Left colon (tissue), 2 donors: ENCODE measurements at regions of chr12 and their contacts with region 1.

Region 1: GRCh38 chr12:53344824-53345485 is 8.8 kb upstream of the SP7 start:
- DNase-seq: peak; percentile 71 to 80
- ATAC-seq: peak; percentile 92

Region 2: GRCh38 chr12:53151039-53151438 is 193.9 kb before region 1 on chr12:
- intact Hi-C with region 1: no loop called
- DNase-seq: no peak
- ATAC-seq: no peak

Region 3: GRCh38 chr12:53500776-53501614 is 156.0 kb after region 1 on chr12 and contains the start of gene TARBP2:
- intact Hi-C with region 1: loop called in 1 of 2 experiments (anchors 10 kb)
- DNase-seq: peak; percentile 99
- ATAC-seq: peak; percentile 82
- total RNA-seq, gene TARBP2: 21.3 to 22.3 TPM